AG04450 (cell line): ENCODE measurements at regions of chr5 and their contacts with region 1.

Region 1: DNA sequence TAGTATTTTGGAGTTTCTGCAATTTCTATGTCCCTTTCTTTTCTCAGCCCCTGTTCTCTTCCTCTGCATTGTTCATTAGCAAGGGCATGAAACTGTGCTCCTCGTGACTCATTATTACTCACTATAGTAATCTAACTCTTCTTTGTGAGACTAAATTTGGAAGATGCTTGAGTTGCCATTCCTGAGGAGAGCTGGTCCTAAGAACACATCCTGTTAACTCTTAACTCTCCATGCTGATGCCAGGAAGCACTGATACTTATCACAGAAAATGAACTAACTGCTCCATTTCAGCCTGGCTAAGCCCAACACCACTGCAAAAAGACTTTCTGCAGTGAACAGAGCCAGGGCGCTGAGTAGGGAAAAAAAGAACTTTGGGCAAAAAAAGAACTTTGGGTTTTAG is 10.6 kb upstream of the CSNK1A1 start:
- DNase-seq: peak; percentile 84
- H3K4me3 ChIP-seq: no peak overlapping the region; the same call in 1 of the 2 replicates
- H3K27ac ChIP-seq: peak overlapping the region; percentile 90
- H3K27me3 ChIP-seq: no peaks in the 10 kb centered on the region
- CTCF ChIP-seq: no peak

Region 2: DNA sequence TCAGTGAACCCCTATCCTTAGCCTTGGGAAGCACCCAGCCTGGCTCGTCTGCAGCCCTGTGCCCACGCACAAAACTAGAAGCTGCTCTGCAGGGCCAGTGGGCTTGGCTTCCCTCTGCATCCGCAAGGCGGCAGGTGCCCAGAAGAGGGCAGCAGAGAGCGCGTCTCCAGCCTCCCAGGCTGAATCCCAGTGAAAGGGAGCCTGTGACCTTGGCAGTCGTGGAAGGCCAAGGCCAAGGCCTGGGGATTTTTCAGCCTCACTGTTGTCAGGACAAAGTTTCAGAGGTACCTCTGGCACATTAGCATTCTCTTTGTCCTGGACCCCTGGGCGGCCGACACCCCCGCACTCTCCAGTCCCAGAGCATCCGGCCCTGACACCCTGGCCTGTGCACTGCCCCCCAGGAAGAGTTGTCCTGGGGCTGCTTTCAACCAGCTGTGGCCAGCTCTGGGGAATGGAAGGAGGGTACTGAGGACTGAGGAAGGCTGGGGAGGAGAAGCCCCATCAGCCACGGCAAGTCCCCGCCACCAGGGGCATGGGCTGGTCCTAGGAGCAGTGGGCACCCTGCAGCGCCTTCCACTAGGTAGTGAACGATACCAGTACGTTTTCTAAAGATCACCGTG is 119.2 kb before region 1 on chr5:
- CTCF ChIA-PET with region 1: interaction called, 48 read pairs
- POLR2A ChIA-PET with region 1: interaction called, 10 read pairs
- DNase-seq: peak; percentile 44
- H3K4me3 ChIP-seq: no peak overlapping the region
- H3K27ac ChIP-seq: peak overlapping the region; percentile 0
- H3K27me3 ChIP-seq: peaks cover 2% of the 10 kb centered on the region
- CTCF ChIP-seq: peak; percentile 93

Region 3: GRCh38 chr5:149490599-149491485 is 71.0 kb before region 1 on chr5:
- CTCF ChIA-PET with region 1: interaction called, 3 read pairs
- POLR2A ChIA-PET with region 1: interaction called, 19 read pairs
- DNase-seq: no peak
- H3K4me3 ChIP-seq: no peak overlapping the region
- H3K27ac ChIP-seq: no peak overlapping the region
- H3K27me3 ChIP-seq: no peaks in the 10 kb centered on the region
- CTCF ChIP-seq: no peak

Region 4: GRCh38 chr5:149551200-149552037 is 10.4 kb before region 1 on chr5 and contains the start of gene CSNK1A1:
- CTCF ChIA-PET with region 1: interaction called, 25 read pairs
- POLR2A ChIA-PET with region 1: interaction called, 38 read pairs
- DNase-seq: peak; percentile 97
- H3K4me3 ChIP-seq: peak within 1 kb of the TSS; percentile 96
- H3K27ac ChIP-seq: peak within 1 kb of the TSS; percentile 91
- H3K27me3 ChIP-seq: no peaks in the 10 kb centered on the region
- CTCF ChIP-seq: peak; percentile 86
- polyA plus RNA-seq, gene CSNK1A1: 260 and 329 TPM in 2 replicates

Region 5: DNA sequence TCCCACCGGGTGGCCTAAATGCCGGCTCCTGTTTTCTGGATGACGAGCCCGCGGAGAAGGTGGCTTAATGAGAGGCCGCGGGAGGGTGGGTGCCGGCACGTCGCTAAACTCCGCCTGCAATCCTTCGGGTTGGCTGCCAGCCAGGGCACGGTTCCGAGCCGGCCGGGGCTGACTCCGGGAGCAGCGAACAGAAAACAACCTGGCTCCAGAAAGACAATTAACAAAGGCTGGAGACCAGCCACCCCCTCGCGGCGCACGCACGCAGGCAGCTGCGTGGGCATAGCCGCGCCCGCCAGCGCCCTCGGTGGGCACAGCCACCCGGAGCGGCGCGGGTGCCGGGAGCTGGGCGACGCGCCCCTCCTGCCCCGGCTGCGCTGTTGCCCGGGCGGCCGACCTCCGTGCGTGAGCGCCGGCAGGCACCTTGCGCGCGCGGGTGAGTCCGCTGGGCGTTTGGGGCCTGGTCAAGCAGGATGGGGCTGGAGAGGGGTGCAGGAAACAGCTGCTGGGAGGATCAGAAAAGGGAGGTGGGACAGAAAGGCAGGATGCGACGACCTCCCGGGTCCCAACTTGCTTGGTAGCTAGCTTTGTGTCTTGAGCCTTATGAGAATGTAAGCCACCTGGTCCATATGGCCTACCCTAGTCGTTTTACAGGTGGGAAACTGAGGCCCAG is 19.5 kb after region 1 on chr5 and contains the start of gene ARHGEF37:
- CTCF ChIA-PET with region 1: interaction called, 17 read pairs
- POLR2A ChIA-PET with region 1: no interaction called
- DNase-seq: no peak
- H3K4me3 ChIP-seq: peak within 1 kb of the TSS; percentile 49
- H3K27ac ChIP-seq: no peak within 1 kb of the TSS
- H3K27me3 ChIP-seq: no peaks in the 10 kb centered on the region
- CTCF ChIP-seq: no peak
- polyA plus RNA-seq, gene ARHGEF37: 0.61 and 0.74 TPM in 2 replicates

Region 6: DNA sequence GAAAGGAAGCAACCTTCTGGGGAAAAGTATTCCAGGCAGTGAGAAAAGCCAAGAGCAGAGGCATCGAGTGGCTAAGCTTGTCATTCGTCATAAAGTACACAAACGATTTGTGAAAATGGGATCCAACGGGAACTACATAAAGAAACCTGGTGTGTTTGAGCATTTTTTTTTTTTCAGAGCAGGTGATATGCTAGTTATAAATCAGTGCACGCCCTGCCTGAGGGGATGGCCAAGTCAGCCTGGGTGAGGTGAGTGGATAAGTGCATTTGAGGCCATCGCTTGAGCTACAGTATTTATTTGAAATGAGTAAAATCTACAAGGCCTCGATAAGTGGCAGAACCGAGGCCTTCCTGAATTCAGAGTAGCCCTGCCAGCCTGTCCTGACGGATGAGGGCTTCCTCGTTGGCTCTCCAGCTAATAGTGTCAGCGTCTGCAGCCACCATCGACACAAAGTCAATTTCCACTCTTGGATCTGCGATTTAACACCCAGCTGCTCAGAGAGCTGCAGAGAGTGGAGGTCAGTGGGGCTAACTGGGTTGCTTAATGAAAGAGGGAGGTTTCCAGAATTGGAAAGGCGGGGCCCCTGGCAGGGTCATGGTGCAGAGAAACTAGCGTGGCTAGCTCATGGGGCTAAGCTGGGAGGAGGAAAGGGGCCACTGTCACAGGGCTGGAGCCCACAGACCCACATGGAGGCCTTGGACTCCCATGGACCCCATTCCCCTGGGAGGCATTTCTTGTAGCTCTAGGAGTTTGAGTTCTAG is 195.5 kb after region 1 on chr5:
- CTCF ChIA-PET with region 1: no interaction called
- POLR2A ChIA-PET with region 1: no interaction called
- DNase-seq: no peak
- H3K4me3 ChIP-seq: no peak overlapping the region
- H3K27ac ChIP-seq: no peak overlapping the region
- H3K27me3 ChIP-seq: peaks cover 8% of the 10 kb centered on the region
- CTCF ChIP-seq: no peak